ENCODE measurements at regions of chr1 and their contacts with region 1.

Region 1: GRCh38 chr1:46616277-46617107 is at the start of gene MOB3C:
- DNase-seq: peak; percentile 97
- H3K4me3 ChIP-seq: peak within 1 kb of the TSS; percentile 83 to 99 (median 86)
- H3K27ac ChIP-seq: peak within 1 kb of the TSS; percentile 94 to 97 (median 95)
- H3K4me1 ChIP-seq: peaks cover 52 to 56% (median 53%) of the 10 kb centered on the region in 4 donors
- H3K27me3 ChIP-seq: no peaks in the 10 kb centered on the region
- CTCF ChIP-seq: peak in 1 of 3 experiments; percentile 5
- EP300 ChIP-seq: no peak
- POLR2A ChIP-seq: peak; percentile 70
- total RNA-seq, gene MOB3C: 19.5 to 27.0 (median 24.4) TPM

Region 2: DNA sequence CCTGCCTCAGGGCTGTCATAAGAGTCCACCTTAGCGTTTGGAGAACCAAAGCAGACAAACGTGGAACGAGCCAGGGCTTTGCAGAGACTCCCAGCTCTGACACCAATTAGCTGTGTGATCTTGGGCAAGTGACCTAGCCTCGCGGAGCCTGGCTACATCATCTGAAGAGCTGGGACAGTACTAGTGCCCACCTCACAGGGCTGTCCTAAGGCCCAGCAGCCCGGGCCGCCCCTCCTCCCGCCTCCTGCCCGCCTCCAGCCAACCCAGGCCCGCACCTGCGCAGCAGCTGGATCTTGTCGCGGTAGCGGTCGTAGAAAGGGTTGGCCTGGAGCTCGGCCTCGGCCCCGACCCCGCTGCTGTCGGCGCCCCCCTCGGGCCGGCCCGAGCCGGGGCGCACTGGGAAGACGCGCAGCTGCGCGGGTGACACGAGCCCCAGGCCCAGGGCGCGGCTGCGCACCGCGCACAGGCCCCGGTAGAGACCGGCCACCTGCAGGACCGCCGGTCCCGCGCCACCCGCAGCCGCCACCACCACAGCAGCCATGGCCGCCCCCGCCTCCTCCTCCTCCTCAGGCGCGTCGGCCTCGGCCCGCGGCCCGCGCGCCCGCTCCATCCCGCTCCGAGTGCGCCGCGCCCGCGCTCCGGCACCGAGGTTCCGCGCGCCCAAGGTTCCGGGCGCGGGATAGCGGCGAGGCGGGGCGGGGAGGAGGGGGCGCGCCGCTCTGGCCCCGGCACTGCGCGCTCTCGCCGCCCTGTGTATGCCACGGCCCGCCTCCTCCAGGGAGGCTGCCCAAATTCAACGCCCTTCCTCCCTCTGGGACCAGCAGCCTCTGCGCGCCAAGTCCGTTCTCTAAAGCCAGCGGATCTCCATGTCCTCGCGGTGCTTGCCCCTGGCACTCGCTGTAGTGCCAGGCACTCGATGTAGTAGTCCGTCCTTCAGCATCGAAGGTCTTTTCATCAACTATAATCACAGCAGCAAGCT is 51.6 kb after region 1 on chr1 and contains the start of gene ATPAF1:
- intact Hi-C with region 1: loop called (anchors 5 kb)
- DNase-seq: no peak
- H3K4me3 ChIP-seq: peak within 1 kb of the TSS; percentile 97 to 99 (median 98)
- H3K27ac ChIP-seq: peak within 1 kb of the TSS; percentile 87 to 93 (median 93)
- H3K4me1 ChIP-seq: peaks cover 13 to 44% (median 35%) of the 10 kb centered on the region in 4 donors
- H3K27me3 ChIP-seq: no peaks in the 10 kb centered on the region
- CTCF ChIP-seq: peak in 1 of 3 experiments; percentile 28
- EP300 ChIP-seq: no peak
- POLR2A ChIP-seq: no peak
- total RNA-seq, gene ATPAF1: 64.4 to 88.0 (median 68.5) TPM